Pancreas (tissue), 10 donors: ENCODE measurements at regions of chr12 and their contacts with region 1.

Region 1: DNA sequence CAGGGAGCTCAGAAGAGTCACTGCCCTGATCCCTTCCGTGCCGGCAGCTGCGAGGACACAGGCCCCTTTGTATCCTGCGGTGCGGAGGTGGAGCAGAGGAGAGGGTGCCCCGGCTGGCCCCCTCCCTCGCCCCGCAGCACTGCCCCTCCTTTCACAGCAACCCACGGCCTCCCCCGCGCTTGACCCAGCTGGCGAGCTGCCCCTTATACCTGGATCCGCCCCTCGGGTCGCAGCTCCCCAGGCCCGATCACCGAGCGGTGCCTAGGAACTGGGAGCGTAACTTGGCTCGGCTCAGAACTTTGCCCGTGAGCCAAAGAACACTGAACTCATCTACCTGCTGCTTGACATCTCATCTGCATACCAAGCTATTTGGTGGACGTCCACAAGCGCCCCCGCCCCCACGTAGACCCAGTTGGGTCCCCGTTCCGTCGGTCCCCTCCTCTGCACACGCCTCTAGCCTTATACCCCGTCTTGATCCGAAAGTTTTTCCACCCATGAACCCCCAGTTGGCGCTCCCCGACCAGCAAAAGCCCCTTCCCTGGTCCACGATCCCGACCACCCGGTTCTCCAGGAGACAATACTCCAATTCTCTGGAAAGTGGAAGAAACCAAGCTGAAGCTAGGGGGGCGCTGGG is 697 bp upstream of the DNAJC14 start:
- DNase-seq: peak; percentile 65 to 89 (median 74)
- ATAC-seq: peak; percentile 37 to 52 (median 44)
- H3K4me3 ChIP-seq: peak overlapping the region; percentile 74 to 94 (median 88)
- H3K27ac ChIP-seq: peak overlapping the region; percentile 70 to 88 (median 87)
- H3K4me1 ChIP-seq: peaks cover 3 to 22% (median 10%) of the 10 kb centered on the region in 3 donors
- H3K27me3 ChIP-seq: no peaks in the 10 kb centered on the region
- CTCF ChIP-seq: no peak

Region 2: GRCh38 chr12:55659486-55660385 is 170.3 kb before region 1 on chr12:
- intact Hi-C with region 1: no loop called
- DNase-seq: no peak
- ATAC-seq: peak in 3 of 4 donors; percentile 54 to 68 (median 61)
- H3K4me3 ChIP-seq: no peak overlapping the region
- H3K27ac ChIP-seq: no peak overlapping the region
- H3K4me1 ChIP-seq: no peaks in the 10 kb centered on the region
- H3K27me3 ChIP-seq: no peaks in the 10 kb centered on the region
- CTCF ChIP-seq: no peak

Region 3: GRCh38 chr12:55908726-55909512 is 78.8 kb after region 1 on chr12:
- intact Hi-C with region 1: loop called in 1 of 3 experiments (anchors 10 kb)
- DNase-seq: peak in 1 of 6 donors; percentile 30
- ATAC-seq: peak; percentile 83 to 91 (median 89)
- H3K4me3 ChIP-seq: no peak overlapping the region
- H3K27ac ChIP-seq: peak overlapping the region; percentile 47 to 78 (median 72)
- H3K4me1 ChIP-seq: peaks cover 13 to 36% (median 31%) of the 10 kb centered on the region in 3 donors
- H3K27me3 ChIP-seq: no peaks in the 10 kb centered on the region
- CTCF ChIP-seq: no peak